Activated naive CD4-positive, alpha-beta T cell treated with anti-CD3 and anti-CD28 coated beads, Interleukin-2, amount 10 ng/mL, durations not matched to agents 7 days and 5 days (primary cell): ENCODE measurements at regions of chr13 and their contacts with region 1.

Region 1: DNA sequence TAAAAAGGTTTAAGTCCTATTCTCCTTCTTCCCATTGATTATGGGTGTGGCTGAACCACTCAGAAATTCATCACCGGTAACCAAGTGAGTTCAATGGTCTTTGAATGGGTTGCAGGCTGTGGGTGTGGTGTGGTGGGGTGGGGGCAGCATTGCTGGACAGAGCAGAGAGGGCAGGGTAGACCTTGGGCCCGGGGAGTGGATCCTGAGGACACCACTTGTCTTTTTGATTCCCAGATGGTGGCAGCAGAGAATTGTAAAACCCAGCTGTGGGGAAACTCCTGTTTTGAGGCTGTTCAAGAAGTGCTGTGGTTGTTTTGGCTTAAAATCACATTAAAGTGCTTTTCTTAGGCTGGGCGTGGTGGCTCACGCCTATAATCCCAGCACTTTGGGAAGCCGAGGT is 45.8 kb upstream of the RGCC start:
- DNase-seq: peak; percentile 48
- H3K4me3 Mint-ChIP-seq: no peak overlapping the region
- H3K27ac Mint-ChIP-seq: no peak overlapping the region
- H3K4me1 Mint-ChIP-seq: no peaks in the 10 kb centered on the region
- H3K27me3 Mint-ChIP-seq: peaks cover 9% of the 10 kb centered on the region

Region 2: DNA sequence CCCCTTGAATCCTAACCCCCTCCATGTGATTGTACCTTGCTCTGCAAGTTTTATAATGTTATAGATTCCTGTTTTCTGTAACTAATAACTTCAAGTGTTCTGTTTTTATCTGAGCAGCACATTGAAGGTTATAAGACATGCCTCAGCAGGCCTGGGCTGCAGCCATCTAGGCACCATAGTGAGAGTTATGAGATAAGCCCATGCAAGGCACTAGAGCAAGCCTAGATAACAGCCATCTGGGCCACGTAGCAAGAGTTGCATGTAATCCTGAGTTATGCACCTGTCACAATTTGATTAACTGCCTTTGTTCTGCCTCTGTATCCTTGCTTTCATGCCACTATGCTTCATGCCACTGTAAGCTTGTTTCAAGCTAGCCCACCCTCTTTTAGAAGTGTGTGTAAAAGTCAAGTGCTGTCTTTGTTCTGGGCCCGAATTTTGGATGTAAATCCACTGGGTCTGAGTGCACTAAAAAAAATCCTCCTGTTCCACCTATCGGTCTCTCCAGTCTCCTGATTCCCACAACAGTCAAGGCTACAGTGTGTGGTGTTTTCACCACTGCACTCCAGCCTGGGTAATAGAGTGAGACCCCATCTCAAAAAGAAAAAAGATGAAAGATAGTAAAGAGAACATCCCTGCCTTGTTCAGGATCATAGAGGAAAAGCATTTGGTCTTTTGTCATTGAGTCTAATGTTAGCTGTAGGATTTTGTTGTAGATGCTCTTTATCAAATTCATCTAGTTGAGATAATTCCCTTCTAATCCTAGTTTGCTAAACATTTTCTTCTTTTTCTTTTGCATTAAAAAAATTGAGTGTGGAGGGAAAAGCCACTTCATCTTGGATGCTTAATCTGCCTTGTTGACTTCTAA is 262.9 kb before region 1 on chr13:
- CTCF ChIA-PET with region 1: no interaction called
- DNase-seq: no peak
- H3K4me3 Mint-ChIP-seq: no peak overlapping the region
- H3K27ac Mint-ChIP-seq: peak overlapping the region; percentile 42
- H3K4me1 Mint-ChIP-seq: no peaks in the 10 kb centered on the region
- H3K27me3 Mint-ChIP-seq: no peaks in the 10 kb centered on the region

Region 3: GRCh38 chr13:41652727-41653361 is 241.3 kb after region 1 on chr13:
- CTCF ChIA-PET with region 1: interaction called, 18 read pairs
- DNase-seq: peak; percentile 63
- H3K4me3 Mint-ChIP-seq: no peak overlapping the region
- H3K27ac Mint-ChIP-seq: no peak overlapping the region
- H3K4me1 Mint-ChIP-seq: peaks cover 2% of the 10 kb centered on the region
- H3K27me3 Mint-ChIP-seq: no peaks in the 10 kb centered on the region